Activated CD4-positive, alpha-beta memory T cell treated with anti-CD3 and anti-CD28 coated beads for 36 hours (primary cell): ENCODE measurements at regions of chr9 and their contacts with region 1.

Region 1: GRCh38 chr9:29691758-29692407 is 2118.6 kb upstream of the C9orf72 start:
- DNase-seq: no peak
- H3K4me3 Mint-ChIP-seq: no peak overlapping the region
- H3K27ac Mint-ChIP-seq: no peak overlapping the region
- H3K4me1 Mint-ChIP-seq: no peaks in the 10 kb centered on the region
- H3K27me3 Mint-ChIP-seq: no peaks in the 10 kb centered on the region

Region 2: DNA sequence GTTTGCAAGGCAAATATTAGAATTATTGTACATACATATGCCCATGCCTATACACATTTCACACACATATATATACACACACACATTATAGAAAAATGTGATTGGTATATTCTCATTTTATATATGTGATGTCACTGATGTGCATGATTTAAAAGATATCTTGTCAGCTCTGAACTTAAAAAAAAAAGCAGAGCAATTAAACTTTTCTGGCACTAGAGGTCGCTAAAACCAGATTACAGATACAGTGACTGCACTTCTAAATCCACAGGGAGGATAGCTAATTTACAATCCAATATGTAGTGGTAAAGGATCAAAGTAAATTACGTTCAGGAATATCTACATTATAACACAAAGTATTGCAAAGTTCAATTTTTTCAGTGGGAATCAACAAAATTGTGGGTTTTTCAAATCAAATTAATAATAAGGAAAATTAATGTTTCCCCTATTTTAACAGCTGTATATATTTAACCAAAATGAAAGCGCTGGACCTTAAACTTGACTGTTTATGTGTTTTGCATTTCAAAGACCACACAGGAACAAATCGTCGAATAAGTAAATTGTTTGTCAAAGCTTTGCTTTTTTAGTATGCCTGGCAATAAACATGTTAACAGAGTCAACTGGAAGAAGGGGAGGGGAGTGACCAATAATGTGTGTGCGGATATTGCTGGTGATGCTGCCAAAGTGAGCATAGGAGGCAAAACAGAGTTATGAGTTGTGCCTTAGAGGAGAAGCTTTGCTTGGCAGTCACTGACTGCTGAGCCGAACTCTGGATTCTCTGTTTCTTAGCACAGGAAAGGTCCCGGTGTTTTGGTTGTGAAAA is 917.3 kb before region 1 on chr9:
- CTCF ChIA-PET with region 1: no interaction called
- POLR2A ChIA-PET with region 1: no interaction called
- intact Hi-C with region 1: loop called (anchors 5 kb)
- DNase-seq: no peak
- H3K4me3 Mint-ChIP-seq: no peak overlapping the region
- H3K27ac Mint-ChIP-seq: no peak overlapping the region
- H3K4me1 Mint-ChIP-seq: no peaks in the 10 kb centered on the region
- H3K27me3 Mint-ChIP-seq: no peaks in the 10 kb centered on the region